ENCODE measurements at regions of chr5 and their contacts with region 1.

Region 1: DNA sequence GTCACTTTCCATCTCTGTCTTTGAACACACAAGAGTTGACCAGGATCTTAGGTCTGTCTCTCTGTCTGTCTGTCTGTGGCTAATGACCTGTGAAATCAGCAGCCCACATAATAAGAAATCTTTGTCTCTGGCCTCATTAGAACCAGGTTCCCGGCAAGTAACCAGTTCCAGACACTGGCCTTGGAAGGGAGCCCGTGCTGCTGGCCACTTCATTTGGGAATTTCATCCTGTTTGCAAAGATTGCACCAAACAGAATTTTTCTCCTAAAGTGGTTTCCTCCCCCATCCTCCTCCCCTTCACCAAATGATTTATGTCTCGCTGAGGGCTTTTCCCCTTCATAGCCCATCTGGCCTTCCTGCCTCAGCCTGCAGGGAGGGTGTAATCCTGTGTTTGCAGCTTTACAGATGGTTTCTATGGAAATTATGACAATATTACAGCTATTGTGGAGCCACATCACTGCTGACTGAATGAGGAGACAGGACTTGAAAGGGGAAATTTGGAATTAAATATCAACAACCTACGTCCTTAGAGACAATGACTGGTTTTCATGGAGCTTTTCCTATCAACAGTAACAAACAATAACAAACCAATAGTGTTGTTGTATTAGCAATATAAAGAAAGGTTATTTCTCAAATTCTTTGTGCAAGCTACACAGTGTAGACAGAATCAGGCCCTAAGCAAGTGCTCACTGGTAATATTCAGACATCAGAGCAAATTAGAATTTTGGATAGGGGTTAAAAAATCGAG is 25.7 kb downstream of the DPYSL3 start:
- DNase-seq: peak; percentile 98
- H3K4me3 ChIP-seq: no peak overlapping the region
- H3K27me3 ChIP-seq: no peaks in the 10 kb centered on the region
- CTCF ChIP-seq: no peak

Region 2: DNA sequence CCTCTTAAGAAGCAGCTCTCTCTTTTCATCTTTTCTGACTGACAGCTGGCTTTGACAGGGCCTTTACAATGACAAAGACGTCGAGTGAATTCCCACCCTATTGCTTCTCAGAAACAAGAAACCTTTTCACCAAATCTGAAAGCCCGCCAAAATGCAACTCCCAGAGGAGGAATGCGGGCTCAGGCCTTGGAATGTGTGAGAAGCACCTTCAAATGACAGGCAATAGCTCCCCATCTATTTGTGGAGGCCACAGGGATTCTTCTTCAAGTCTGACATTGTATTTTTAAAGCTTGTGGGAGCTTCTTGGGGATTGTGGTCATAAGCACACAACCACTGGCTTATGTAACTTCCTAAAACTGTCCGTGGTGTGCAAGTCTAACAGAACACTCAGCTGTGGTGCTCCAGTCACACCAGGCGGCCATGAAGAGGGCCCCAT is 47.0 kb before region 1 on chr5:
- CTCF ChIA-PET with region 1: no interaction called
- POLR2A ChIA-PET with region 1: no interaction called
- DNase-seq: no peak
- H3K4me3 ChIP-seq: no peak overlapping the region
- H3K27me3 ChIP-seq: no peaks in the 10 kb centered on the region
- CTCF ChIP-seq: no peak

Region 3: GRCh38 chr5:147464211-147464610 is 19.9 kb before region 1 on chr5:
- CTCF ChIA-PET with region 1: interaction called, 20 read pairs
- POLR2A ChIA-PET with region 1: no interaction called
- DNase-seq: no peak
- H3K4me3 ChIP-seq: no peak overlapping the region
- H3K27me3 ChIP-seq: no peaks in the 10 kb centered on the region
- CTCF ChIP-seq: peak; percentile 55

Region 4: DNA sequence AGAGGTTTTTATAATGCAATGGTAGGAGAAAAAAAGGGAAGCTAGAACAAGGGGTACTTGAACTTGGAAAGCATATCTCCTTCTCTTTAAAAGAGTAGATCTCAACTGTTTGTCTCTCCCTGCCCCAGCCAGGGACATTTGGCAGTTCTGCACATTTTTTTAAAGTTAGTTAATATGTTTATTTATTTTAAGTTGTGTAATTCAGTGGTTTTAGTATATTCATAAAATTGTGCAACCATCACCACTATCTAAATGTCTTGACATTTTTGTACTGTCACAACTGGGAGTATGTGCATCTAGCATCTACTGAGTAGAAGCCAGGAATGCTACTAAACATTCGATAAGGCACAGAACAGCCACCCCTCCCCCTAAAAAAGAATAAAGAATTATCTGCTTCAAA is 129.2 kb after region 1 on chr5:
- CTCF ChIA-PET with region 1: no interaction called
- POLR2A ChIA-PET with region 1: no interaction called
- DNase-seq: peak; percentile 5
- H3K4me3 ChIP-seq: no peak overlapping the region
- H3K27me3 ChIP-seq: no peaks in the 10 kb centered on the region
- CTCF ChIP-seq: no peak

Measured in BJ (cell line).